SK-N-SH (cell line): ENCODE measurements at regions of chr9 and their contacts with region 1.

Region 1: GRCh38 chr9:129495534-129496325 is 125.2 kb downstream of the C9orf50 start:
- DNase-seq: peak; percentile 98
- H3K4me3 ChIP-seq: peak overlapping the region; percentile 52 to 70
- H3K27ac ChIP-seq: peak overlapping the region; percentile 96 to 99
- H3K4me1 ChIP-seq: peaks cover 43 to 74% of the 10 kb centered on the region in 2 experiments; a peak in 3 of 4 replicates
- H3K27me3 ChIP-seq: no peaks in the 10 kb centered on the region
- CTCF ChIP-seq: no peak
- EP300 ChIP-seq: peak in 1 of 2 experiments; percentile 42; a peak in 2 of 4 replicates
- RAD21 ChIP-seq: no peak

Region 2: GRCh38 chr9:129172802-129173201 is 322.9 kb before region 1 on chr9:
- CTCF ChIA-PET with region 1: interaction called, 31 read pairs
- POLR2A ChIA-PET with region 1: interaction called, 37 read pairs
- DNase-seq: no peak
- H3K4me3 ChIP-seq: no peak overlapping the region
- H3K27ac ChIP-seq: peak overlapping the region in 1 of 2 experiments; percentile 97; a peak in 1 of 4 replicates
- H3K4me1 ChIP-seq: peaks cover 13 to 15% of the 10 kb centered on the region in 2 experiments; a peak in 3 of 4 replicates
- H3K27me3 ChIP-seq: no peaks in the 10 kb centered on the region
- CTCF ChIP-seq: no peak
- EP300 ChIP-seq: no peak
- RAD21 ChIP-seq: no peak

Region 3: GRCh38 chr9:129352146-129352865 is 143.4 kb before region 1 on chr9:
- CTCF ChIA-PET with region 1: no interaction called
- POLR2A ChIA-PET with region 1: no interaction called
- DNase-seq: peak; percentile 95
- H3K4me3 ChIP-seq: peak overlapping the region; percentile 51 to 60
- H3K27ac ChIP-seq: peak overlapping the region in 1 of 2 experiments; percentile 83; a peak in 2 of 4 replicates
- H3K4me1 ChIP-seq: peaks cover 0 to 14% of the 10 kb centered on the region in 2 experiments; a peak in 1 of 4 replicates
- H3K27me3 ChIP-seq: no peaks in the 10 kb centered on the region
- CTCF ChIP-seq: no peak
- EP300 ChIP-seq: no peak
- RAD21 ChIP-seq: no peak

Region 4: DNA sequence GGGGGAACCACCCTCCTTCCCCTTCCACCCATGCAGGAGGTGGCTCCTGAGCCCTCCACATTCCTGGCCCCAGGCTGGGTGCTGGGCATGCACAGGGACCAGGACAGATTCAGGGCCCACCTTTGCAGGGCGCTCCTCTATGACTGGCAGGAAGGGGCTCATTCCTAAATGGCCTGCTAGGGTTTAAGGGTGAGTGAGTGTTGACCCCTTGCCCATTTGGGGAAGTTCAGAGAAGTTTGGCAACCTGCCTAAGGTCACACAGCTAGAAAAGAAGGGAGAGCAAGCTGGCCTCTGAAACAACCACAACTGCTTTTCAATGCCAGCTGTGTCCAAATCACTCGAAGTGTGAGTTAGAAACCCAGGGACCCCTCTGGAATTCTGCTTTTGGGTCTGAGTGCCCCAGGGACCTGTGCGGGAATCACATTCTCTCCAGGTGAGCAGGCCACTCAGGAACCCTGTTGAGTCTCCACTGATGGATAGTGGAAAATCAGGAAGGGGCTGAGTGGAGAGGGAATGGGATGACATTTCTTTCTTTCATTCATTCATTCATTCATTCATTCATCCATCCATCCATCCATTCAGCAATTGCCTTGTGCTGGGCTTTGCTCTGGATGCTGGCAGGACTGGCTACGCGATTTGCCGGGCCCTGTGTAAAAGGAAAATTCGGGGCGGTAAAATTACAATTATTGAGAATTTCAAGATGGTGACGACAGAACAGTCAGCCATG is 66.7 kb before region 1 on chr9:
- CTCF ChIA-PET with region 1: interaction called, 8 read pairs
- POLR2A ChIA-PET with region 1: interaction called, 16 read pairs
- DNase-seq: no peak
- H3K4me3 ChIP-seq: no peak overlapping the region
- H3K27ac ChIP-seq: peak overlapping the region in 1 of 2 experiments; percentile 62; a peak in 2 of 4 replicates
- H3K4me1 ChIP-seq: peaks cover 0 to 44% of the 10 kb centered on the region in 2 experiments; a peak in 1 of 4 replicates
- H3K27me3 ChIP-seq: no peaks in the 10 kb centered on the region
- CTCF ChIP-seq: no peak
- EP300 ChIP-seq: no peak
- RAD21 ChIP-seq: no peak

Region 5: DNA sequence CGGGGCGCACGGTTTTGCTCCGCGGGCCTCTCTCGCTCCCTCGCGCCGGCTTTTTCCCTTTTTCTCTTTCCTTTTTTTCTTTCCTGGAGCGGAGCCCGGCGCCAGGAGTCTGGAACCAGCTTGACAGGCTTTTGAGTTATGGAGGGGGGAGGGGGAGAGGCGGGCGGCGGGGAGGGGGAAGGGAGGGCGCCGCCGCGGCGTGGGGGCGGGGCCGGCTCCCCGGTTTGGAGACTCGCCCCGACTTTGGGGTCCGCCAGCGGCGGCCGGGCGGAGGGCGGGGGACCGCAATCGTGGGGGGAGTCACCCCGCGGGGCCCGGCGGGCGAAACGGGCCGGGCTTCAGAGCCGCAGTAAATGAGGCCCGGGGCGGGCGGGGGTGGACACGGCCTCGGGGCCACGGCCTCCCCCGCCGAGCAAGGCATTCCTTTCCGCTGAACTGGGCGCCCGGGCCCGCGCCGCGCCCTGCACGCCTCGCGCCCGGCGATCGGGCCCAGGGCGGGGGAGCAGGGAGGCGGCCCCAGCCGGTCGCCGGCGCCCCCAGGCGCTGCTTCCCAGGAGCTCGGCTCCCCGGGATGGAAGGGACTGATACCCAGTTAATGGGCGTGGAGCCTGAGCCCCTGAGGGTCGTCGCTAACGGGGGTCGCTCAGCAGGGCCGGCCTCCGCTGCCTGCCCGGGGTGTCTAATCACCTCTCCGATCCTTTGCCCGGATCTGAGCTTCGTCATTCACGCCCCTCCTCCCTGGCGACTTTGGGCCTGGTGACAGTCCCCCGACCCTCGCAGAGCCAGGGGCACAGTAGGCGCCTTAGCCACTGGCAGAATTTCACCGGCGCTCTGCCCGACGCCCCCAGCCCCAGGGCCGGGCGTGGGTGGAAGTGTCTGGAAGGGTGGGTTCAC is 13.0 kb before region 1 on chr9:
- CTCF ChIA-PET with region 1: interaction called, 3 read pairs
- POLR2A ChIA-PET with region 1: interaction called, 12 read pairs
- DNase-seq: peak; percentile 90
- H3K4me3 ChIP-seq: peak overlapping the region; percentile 37 to 51; a peak in 3 of 4 replicates
- H3K27ac ChIP-seq: peak overlapping the region; percentile 97 to 100
- H3K4me1 ChIP-seq: peaks cover 55 to 78% of the 10 kb centered on the region in 2 experiments; a peak in 3 of 4 replicates
- H3K27me3 ChIP-seq: no peaks in the 10 kb centered on the region
- CTCF ChIP-seq: no peak
- EP300 ChIP-seq: peak in 1 of 2 experiments; percentile 53; a peak in 1 of 4 replicates
- RAD21 ChIP-seq: peak; percentile 35

Region 6: DNA sequence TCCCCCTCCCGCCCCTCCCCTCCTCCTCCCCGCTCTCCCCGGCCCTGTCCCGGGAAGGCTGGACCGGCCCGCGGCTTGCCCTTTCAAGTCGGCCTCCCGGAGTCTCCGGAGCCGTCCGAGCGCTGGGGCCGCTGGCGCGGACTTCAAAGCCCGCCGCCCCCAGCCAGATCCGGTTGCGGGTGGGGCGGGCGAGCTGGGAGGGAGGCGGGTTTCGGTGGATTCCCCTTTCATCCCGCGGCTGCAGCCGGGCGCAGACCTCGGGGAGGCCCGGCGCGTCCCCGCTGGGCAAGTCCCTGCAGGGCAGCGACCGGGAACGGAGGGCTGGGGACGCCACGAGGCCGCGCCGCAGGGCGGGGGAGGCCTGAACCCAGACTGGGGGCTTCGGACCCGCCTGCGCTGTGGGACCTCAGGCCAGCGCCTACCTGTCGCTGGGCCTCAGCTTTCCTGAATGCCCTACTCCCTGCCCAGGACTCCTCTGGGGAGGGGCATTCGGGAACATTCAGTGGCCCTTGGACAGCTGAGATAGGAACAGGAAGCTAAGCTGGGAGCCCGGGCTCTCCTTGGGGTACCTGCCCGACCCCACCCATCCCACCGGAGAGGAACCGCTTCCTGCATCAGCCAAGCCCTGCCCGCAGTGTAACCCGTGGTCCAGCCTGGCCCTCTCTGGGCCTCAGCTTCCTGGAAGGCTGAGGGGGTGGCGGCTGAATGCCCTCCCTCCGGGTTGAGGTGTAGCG is 101.8 kb after region 1 on chr9:
- CTCF ChIA-PET with region 1: interaction called, 3 read pairs
- POLR2A ChIA-PET with region 1: interaction called, 13 read pairs
- DNase-seq: peak; percentile 70
- H3K4me3 ChIP-seq: peak overlapping the region in 1 of 2 experiments; percentile 35; a peak in 2 of 4 replicates
- H3K27ac ChIP-seq: no peak overlapping the region; a peak in 1 of 4 replicates
- H3K4me1 ChIP-seq: peaks cover 0 to 6% of the 10 kb centered on the region in 2 experiments; a peak in 2 of 4 replicates
- H3K27me3 ChIP-seq: no peaks in the 10 kb centered on the region
- CTCF ChIP-seq: no peak
- EP300 ChIP-seq: no peak
- RAD21 ChIP-seq: no peak

Region 7: GRCh38 chr9:129630967-129631672 is 135.4 kb after region 1 on chr9:
- CTCF ChIA-PET with region 1: no interaction called
- POLR2A ChIA-PET with region 1: no interaction called
- DNase-seq: no peak
- H3K4me3 ChIP-seq: no peak overlapping the region
- H3K27ac ChIP-seq: peak overlapping the region in 1 of 2 experiments; percentile 11; a peak in 1 of 4 replicates
- H3K4me1 ChIP-seq: peaks cover 18 to 36% of the 10 kb centered on the region in 2 experiments; a peak in 2 of 4 replicates
- H3K27me3 ChIP-seq: no peaks in the 10 kb centered on the region
- CTCF ChIP-seq: no peak
- EP300 ChIP-seq: no peak
- RAD21 ChIP-seq: no peak